HepG2 (cell line): ENCODE measurements at regions of chr20 and their contacts with region 1.

Region 1: DNA sequence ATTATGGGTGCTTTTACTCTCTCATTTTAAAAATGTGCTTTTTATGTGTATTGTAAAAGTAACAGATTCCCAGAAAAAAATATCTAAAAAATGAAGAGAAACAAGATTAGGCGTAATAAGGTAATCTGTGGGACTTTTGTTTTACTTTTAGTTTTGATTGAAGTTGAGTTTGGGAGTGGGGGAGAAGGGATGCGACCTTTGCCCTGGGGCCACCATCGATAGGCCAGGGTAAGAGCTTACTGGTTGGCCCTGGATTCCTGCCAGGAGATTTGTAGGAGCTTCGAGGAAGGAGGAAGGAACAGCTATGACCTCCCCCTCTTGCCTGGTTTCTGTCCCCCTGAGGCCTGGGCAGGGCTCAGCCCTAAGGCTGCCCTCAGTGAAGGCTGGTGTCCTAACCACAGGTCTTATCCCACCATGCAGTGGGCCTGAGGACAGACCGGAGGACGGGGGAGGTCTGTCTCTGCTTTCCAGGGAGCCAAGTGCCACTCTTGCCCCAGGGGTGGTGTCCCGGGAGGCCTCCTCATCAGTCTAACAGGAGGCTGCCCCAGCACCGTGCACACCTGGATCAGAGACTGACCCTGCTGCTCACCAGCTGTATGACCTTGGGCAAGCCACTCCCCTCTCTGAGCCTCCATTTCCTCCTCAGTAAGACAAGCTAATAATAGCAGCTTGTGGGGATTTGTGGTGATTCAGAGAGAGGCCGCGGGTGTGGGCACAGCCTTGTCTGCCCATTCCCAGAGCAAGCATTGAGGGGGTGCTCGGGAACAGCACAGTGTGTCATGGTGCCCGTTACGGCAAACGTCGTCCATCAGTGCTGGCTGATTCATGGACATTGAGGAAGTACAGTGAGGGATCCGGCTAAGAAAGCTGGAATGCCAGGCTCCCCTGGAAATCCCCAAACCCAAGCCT is 21.2 kb downstream of the TGM2 start:
- DNase-seq: peak; percentile 91
- ATAC-seq: peak; percentile 77
- H3K4me3 ChIP-seq: peak overlapping the region; percentile 25 to 65 (median 36)
- H3K27ac ChIP-seq: peak overlapping the region; percentile 87
- H3K4me1 ChIP-seq: peaks cover 39% of the 10 kb centered on the region
- H3K27me3 ChIP-seq: no peaks in the 10 kb centered on the region
- CTCF ChIP-seq: no peak
- EP300 ChIP-seq: no peak; a peak in 1 of 4 replicates
- POLR2A ChIP-seq: peak; percentile 66 to 69; a peak in 3 of 4 replicates
- RAD21 ChIP-seq: peak; percentile 8; the same call in 1 of the 2 replicates

Region 2: DNA sequence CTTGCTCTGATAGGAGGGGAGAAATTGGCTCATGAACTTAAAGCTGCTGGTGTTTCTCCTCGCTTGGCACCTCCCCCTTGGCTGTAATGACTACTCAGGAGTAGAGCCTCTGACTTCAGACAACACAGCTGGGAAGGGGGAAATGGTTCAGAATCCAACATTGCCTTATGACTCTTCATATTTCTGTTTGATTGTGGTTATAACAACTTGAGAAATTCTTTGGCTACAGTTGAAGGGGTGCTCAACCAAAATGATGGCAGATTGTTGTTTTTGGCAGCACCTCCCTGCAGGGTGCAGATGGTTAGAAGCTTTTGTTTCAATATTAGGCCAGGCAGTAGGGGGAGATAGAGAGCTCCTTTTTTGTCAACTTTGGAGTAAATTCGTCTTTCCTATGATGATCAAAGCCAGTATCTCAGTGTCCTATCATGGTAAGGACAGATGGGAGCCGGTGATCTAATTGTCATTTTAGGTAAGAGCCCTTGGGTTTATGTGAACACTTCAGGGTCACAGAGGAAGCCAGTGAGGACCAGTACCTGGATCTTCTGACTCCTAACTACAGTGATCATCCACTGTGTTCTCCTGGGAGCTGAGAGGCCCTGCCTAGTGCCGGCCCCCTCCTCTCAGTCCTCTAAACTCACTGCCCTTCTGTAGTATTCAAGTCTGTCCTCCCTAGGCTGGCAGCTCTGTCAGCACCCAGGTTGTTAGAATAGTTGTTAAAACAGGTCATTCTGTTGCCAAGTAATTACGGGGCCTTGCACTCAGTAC is 70.4 kb before region 1 on chr20:
- CTCF ChIA-PET with region 1: no interaction called
- POLR2A ChIA-PET with region 1: interaction called, 20 read pairs
- in situ Hi-C with region 1: no loop called
- intact Hi-C with region 1: no loop called
- DNase-seq: peak; percentile 76
- ATAC-seq: peak; percentile 82
- H3K4me3 ChIP-seq: no peak overlapping the region
- H3K27ac ChIP-seq: no peak overlapping the region
- H3K4me1 ChIP-seq: peaks cover 37% of the 10 kb centered on the region
- H3K27me3 ChIP-seq: no peaks in the 10 kb centered on the region
- CTCF ChIP-seq: peak; percentile 84
- EP300 ChIP-seq: no peak
- POLR2A ChIP-seq: no peak
- RAD21 ChIP-seq: peak; percentile 79

Region 3: GRCh38 chr20:38084400-38084951 is 59.4 kb before region 1 on chr20:
- CTCF ChIA-PET with region 1: no interaction called
- POLR2A ChIA-PET with region 1: interaction called, 23 read pairs
- in situ Hi-C with region 1: no loop called
- intact Hi-C with region 1: no loop called
- DNase-seq: peak; percentile 79
- ATAC-seq: peak; percentile 24; the same call in 1 of the 3 replicates
- H3K4me3 ChIP-seq: no peak overlapping the region
- H3K27ac ChIP-seq: peak overlapping the region; percentile 48
- H3K4me1 ChIP-seq: peaks cover 55% of the 10 kb centered on the region
- H3K27me3 ChIP-seq: no peaks in the 10 kb centered on the region
- CTCF ChIP-seq: no peak
- EP300 ChIP-seq: no peak
- POLR2A ChIP-seq: no peak
- RAD21 ChIP-seq: no peak

Region 4: GRCh38 chr20:38094373-38094891 is 49.5 kb before region 1 on chr20:
- CTCF ChIA-PET with region 1: no interaction called
- POLR2A ChIA-PET with region 1: interaction called, 17 read pairs
- in situ Hi-C with region 1: no loop called
- intact Hi-C with region 1: no loop called
- DNase-seq: peak; percentile 52
- ATAC-seq: no peak
- H3K4me3 ChIP-seq: no peak overlapping the region; a peak in 1 of 6 replicates
- H3K27ac ChIP-seq: peak overlapping the region; percentile 66
- H3K4me1 ChIP-seq: peaks cover 49% of the 10 kb centered on the region
- H3K27me3 ChIP-seq: no peaks in the 10 kb centered on the region
- CTCF ChIP-seq: no peak
- EP300 ChIP-seq: 0 out of 4 replicates have a peak, but pooled peaks of 1 of the 2 experiments have one; percentile 57
- POLR2A ChIP-seq: no peak
- RAD21 ChIP-seq: no peak

Region 5: DNA sequence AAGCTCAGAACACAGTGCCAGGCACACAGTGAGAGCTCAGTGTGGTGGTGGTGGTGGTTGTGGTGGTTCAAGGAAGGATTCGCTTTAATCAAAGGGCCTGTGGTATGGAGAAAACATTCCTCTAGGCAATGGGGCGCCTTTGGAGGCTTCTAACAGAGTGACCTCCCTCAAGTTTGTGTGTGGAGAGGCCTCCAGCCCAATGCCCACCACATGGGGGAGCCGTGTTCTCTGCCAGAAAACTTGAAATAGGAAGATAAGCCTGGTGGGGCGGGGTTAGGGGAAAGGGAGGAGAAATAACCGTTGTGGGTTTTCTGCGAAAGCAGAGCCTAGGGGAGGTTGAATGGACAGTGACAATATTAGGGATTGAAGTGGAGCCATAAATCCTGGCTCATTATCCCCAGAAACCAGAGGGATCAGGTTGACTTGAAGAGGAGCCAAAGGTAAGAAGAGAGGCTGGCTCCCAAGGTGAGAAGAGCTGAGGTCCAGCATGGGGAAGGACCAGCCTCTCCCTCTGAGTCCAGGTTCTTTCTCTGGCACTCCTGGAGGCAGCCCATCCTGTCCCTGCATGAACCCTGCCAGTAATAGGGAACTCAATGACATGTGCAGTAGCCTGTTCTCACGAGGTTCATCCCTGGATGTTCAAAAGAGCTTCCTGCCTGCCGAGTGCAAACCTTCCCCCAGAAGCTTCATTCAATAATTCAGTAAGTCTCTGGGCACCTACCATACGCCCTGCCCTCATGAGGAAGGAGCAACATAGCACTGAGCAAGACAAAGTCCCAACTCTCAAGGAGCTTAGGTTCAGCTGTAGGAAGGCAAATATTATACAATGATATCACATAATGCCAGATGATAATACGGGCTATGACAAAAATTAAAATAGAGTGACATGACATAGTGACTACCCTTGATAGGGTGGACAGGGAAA is 30.2 kb before region 1 on chr20:
- CTCF ChIA-PET with region 1: no interaction called
- POLR2A ChIA-PET with region 1: interaction called, 44 read pairs
- in situ Hi-C with region 1: no loop called
- intact Hi-C with region 1: no loop called
- DNase-seq: peak; percentile 78
- ATAC-seq: peak; percentile 73
- H3K4me3 ChIP-seq: no peak overlapping the region
- H3K27ac ChIP-seq: no peak overlapping the region
- H3K4me1 ChIP-seq: peaks cover 51% of the 10 kb centered on the region
- H3K27me3 ChIP-seq: no peaks in the 10 kb centered on the region
- CTCF ChIP-seq: peak; percentile 81
- EP300 ChIP-seq: no peak
- POLR2A ChIP-seq: no peak
- RAD21 ChIP-seq: peak; percentile 78

Region 6: DNA sequence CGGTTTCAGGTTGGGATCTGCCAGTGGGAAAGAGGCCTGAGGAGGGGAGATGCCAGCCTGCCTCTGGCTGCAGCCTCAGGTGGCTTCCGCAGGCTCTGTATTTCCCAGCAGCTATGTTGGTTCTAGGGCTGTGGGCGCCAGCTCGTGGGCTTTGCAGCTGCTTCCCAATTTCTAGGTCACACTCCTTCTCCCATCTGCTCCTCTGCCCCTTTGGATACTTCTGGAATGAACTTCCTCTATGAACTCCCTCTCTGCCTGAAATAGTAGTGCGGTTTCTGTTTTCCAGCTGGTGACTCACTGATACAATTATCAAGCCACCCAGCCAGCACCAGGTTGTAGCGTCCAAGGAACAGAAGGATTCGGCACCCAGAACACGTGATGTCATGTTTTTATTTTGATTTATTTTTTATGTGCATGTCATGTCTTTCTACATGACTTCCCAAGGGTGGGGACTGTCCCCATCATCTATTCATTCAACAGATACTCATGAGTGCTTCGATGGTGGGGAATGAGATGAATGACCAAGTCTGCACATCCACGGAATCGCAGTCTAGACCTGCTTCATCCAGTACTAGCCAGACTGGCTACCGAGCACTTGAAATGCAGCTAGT is 16.8 kb before region 1 on chr20:
- CTCF ChIA-PET with region 1: no interaction called
- POLR2A ChIA-PET with region 1: interaction called, 50 read pairs
- in situ Hi-C with region 1: no loop called
- intact Hi-C with region 1: loop called (anchors 1 kb)
- DNase-seq: no peak
- ATAC-seq: no peak
- H3K4me3 ChIP-seq: no peak overlapping the region
- H3K27ac ChIP-seq: no peak overlapping the region
- H3K4me1 ChIP-seq: peaks cover 64% of the 10 kb centered on the region
- H3K27me3 ChIP-seq: no peaks in the 10 kb centered on the region
- CTCF ChIP-seq: no peak
- EP300 ChIP-seq: no peak
- POLR2A ChIP-seq: no peak
- RAD21 ChIP-seq: no peak

Region 7: DNA sequence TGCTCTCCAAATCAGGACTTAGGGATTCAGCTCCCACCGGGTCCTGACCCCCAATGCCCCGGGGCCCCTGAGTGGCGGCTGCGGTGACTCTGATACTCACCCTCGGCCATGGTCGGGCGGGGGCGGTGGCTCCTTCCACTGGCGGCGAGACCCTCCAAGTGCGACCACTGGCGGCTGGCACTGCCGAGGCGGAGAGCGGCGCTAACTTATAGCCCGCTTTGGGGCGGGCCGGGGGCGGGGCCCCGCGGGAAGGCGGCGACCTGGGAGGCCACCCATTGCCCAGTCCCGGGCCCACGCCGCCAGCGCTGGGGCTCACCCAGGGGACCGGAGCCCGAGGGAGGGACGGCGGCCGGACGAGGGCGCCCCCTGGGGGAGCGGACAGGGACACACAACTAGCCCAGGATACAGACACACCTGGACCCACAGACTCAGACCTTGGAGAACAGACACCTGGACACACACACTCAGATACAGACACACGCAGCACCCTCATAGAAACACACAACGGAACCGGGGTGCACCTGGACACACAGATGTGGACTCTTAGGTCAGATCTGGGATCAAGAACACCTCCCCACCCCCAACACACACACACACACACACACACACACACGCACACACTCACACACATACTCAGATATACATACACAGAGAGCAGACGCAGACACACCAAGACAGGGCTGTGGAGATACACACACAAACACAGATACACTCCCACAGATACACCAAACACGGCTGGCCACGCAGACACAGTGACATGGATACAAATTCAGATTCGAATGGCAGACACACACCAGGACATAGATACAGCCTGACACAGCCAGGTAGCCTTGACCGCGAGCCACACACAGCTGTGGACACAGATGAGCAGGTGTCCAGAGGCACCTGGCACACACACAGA is 21.4 kb after region 1 on chr20 and contains the start of gene TGM2:
- CTCF ChIA-PET with region 1: no interaction called
- POLR2A ChIA-PET with region 1: interaction called, 37 read pairs
- in situ Hi-C with region 1: no loop called
- intact Hi-C with region 1: loop called (anchors 1 kb)
- DNase-seq: peak; percentile 87
- ATAC-seq: peak; percentile 90
- H3K4me3 ChIP-seq: peak within 1 kb of the TSS; percentile 57 to 82 (median 65)
- H3K27ac ChIP-seq: no peak within 1 kb of the TSS
- H3K4me1 ChIP-seq: peaks cover 87% of the 10 kb centered on the region
- H3K27me3 ChIP-seq: no peaks in the 10 kb centered on the region
- CTCF ChIP-seq: peak; percentile 95
- EP300 ChIP-seq: peak in 1 of 2 experiments; percentile 57; a peak in 2 of 4 replicates
- POLR2A ChIP-seq: peak in 1 of 2 experiments; percentile 74; a peak in 1 of 4 replicates
- RAD21 ChIP-seq: peak; percentile 100
- total RNA-seq, gene TGM2: 4.2 and 4.5 TPM in 2 replicates